GM12878 (cell line): ENCODE measurements at regions of chr16 and their contacts with region 1.

Region 1: DNA sequence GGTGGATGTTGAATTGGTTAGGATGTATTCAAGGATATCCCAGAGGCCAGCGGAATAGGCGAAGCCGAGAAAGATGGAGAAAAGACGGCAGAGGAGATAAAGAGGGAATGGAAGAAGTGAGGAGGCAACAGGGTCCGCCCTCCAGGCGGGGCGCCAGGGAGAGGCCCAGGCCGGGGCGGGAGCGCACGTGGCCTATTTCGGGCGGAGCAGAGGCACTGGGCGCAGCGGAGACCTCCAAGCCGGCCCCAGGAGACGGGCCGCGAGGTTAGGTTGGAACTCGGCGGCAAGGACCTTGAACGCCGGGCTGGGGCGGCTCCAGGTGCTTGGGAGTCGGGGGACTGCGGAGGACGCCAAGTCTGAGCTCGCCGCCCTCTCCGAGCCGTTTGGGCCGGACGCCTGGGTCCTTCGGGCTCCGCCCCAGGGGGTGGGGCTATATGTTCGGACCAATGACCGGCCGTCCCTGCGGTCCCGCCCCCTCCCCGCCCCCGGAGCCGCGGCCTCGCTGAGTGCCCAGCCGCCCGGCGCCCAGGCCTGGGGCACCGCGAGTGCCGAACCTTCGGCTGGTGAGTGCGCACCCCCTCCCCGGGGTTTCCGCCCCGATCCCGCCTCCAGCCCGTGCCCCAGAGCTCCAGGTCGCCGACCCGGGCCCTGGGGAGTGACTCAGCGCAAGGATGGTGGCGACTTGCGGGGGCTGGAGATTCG is at the start of gene ZNF771:
- DNase-seq: no peak
- ATAC-seq: peak; percentile 93
- H3K4me3 ChIP-seq: peak within 1 kb of the TSS; percentile 83
- H3K27ac ChIP-seq: no peak within 1 kb of the TSS
- H3K4me1 ChIP-seq: peaks cover 14% of the 10 kb centered on the region
- H3K27me3 ChIP-seq: no peaks in the 10 kb centered on the region; a peak in 1 of 4 replicates
- CTCF ChIP-seq: peak in 1 of 3 experiments; percentile 21; a peak in 1 of 6 replicates
- EP300 ChIP-seq: no peak
- POLR2A ChIP-seq: peak; percentile 82
- RAD21 ChIP-seq: no peak
- polyA plus RNA-seq, gene ZNF771: 0.98 to 2.0 TPM

Region 2: GRCh38 chr16:30112197-30113030 is 294.8 kb before region 1 on chr16:
- CTCF ChIA-PET with region 1: interaction called, 12 read pairs
- POLR2A ChIA-PET with region 1: interaction called, 4 read pairs
- RAD21 ChIA-PET with region 1: interaction called, 3 read pairs
- SMC1A ChIA-PET with region 1: no interaction called
- in situ Hi-C with region 1: no loop called
- intact Hi-C with region 1: no loop called
- DNase-seq: no peak
- ATAC-seq: peak; percentile 93
- H3K4me3 ChIP-seq: no peak overlapping the region
- H3K27ac ChIP-seq: no peak overlapping the region
- H3K4me1 ChIP-seq: peaks cover 2% of the 10 kb centered on the region
- H3K27me3 ChIP-seq: no peaks in the 10 kb centered on the region
- CTCF ChIP-seq: peak; percentile 75 to 87 (median 76)
- EP300 ChIP-seq: no peak
- POLR2A ChIP-seq: no peak
- RAD21 ChIP-seq: peak; percentile 61

Region 3: DNA sequence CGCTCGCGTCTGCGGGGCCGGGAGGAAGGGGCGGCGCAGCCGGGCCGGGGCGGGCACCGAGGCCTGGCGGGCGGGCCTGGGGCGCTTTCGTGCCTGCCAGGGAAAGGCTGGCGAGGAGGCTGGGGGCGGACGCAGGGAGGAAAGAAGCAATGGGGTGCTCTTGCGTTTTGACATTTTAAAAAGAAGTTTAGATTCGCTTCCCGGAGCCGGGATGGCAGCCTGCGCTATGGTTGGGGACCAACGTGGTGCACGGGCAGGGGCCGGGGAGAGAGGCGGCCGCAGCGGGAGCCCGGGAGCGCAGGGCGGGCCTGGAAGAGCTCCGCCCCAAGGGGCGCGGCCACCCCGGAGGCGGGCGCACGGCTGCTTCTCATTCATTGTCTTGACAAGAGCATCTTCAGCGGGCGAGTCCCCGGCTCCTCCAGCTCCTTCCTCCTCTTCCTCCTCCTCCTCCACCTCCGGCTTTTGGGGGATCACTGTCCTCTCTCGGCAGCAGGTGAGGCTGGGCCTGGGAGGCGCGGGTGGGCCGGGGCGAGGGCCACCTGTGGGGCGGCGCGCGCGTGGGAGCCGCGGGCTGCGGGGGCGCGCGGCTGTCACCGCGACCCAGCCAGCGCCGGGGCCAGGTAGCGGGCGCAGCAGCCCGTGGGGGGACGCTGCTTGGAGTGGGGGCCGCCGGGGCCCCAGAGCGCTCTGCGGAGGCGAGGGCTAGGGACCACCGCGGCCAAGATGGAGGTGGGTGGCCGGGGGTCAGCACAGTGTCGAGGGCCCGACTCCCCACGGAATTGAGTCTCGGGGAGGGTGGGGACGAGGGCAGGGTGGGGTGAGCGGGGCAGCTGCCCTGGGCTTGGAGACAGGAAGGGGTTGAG is 223.8 kb before region 1 on chr16 and contains the start of gene CORO1A:
- CTCF ChIA-PET with region 1: interaction called, 10 read pairs
- POLR2A ChIA-PET with region 1: interaction called, 5 read pairs
- RAD21 ChIA-PET with region 1: interaction called, 6 read pairs
- SMC1A ChIA-PET with region 1: no interaction called
- in situ Hi-C with region 1: no loop called
- intact Hi-C with region 1: no loop called
- DNase-seq: peak; percentile 32
- ATAC-seq: peak; percentile 51
- H3K4me3 ChIP-seq: peak within 1 kb of the TSS; percentile 96
- H3K27ac ChIP-seq: peak within 1 kb of the TSS; percentile 100
- H3K4me1 ChIP-seq: peaks cover 28% of the 10 kb centered on the region
- H3K27me3 ChIP-seq: no peaks in the 10 kb centered on the region
- CTCF ChIP-seq: no peak
- EP300 ChIP-seq: no peak
- POLR2A ChIP-seq: peak; percentile 62
- RAD21 ChIP-seq: no peak
- polyA plus RNA-seq, gene CORO1A: 16.3 to 35.3 TPM

Region 4: GRCh38 chr16:30370444-30371247 is 36.6 kb before region 1 on chr16 and contains the start of gene TBC1D10B:
- CTCF ChIA-PET with region 1: interaction called, 70 read pairs
- POLR2A ChIA-PET with region 1: interaction called, 12 read pairs
- RAD21 ChIA-PET with region 1: interaction called, 33 read pairs
- SMC1A ChIA-PET with region 1: interaction called, 16 read pairs
- in situ Hi-C with region 1: no loop called
- intact Hi-C with region 1: no loop called
- DNase-seq: peak; percentile 100
- ATAC-seq: peak; percentile 91
- H3K4me3 ChIP-seq: peak within 1 kb of the TSS; percentile 97
- H3K27ac ChIP-seq: peak within 1 kb of the TSS; percentile 77
- H3K4me1 ChIP-seq: peaks cover 16% of the 10 kb centered on the region
- H3K27me3 ChIP-seq: no peaks in the 10 kb centered on the region
- CTCF ChIP-seq: peak in 2 of 3 experiments; percentile 13 to 24; a peak in 3 of 6 replicates
- EP300 ChIP-seq: no peak
- POLR2A ChIP-seq: no peak; the same call in 1 of the 2 replicates
- RAD21 ChIP-seq: no peak
- polyA plus RNA-seq, gene TBC1D10B: 2.2 to 4.4 TPM

Region 5: GRCh38 chr16:30395155-30395991 is 11.9 kb before region 1 on chr16 and contains the start of gene ZNF48:
- CTCF ChIA-PET with region 1: interaction called, 29 read pairs
- POLR2A ChIA-PET with region 1: interaction called, 12 read pairs
- RAD21 ChIA-PET with region 1: interaction called, 32 read pairs
- SMC1A ChIA-PET with region 1: interaction called, 12 read pairs
- in situ Hi-C with region 1: no loop called
- intact Hi-C with region 1: no loop called
- DNase-seq: no peak
- ATAC-seq: peak; percentile 90
- H3K4me3 ChIP-seq: peak within 1 kb of the TSS; percentile 92
- H3K27ac ChIP-seq: peak within 1 kb of the TSS; percentile 42
- H3K4me1 ChIP-seq: peaks cover 13% of the 10 kb centered on the region
- H3K27me3 ChIP-seq: no peaks in the 10 kb centered on the region
- CTCF ChIP-seq: peak in 2 of 3 experiments; percentile 42 to 46; a peak in 3 of 6 replicates
- EP300 ChIP-seq: no peak
- POLR2A ChIP-seq: peak; percentile 74
- RAD21 ChIP-seq: no peak
- polyA plus RNA-seq, gene ZNF48: 0.14 to 1.0 TPM

Region 6: GRCh38 chr16:30445408-30446202 is 38.4 kb after region 1 on chr16 and contains the start of gene SEPHS2:
- CTCF ChIA-PET with region 1: no interaction called
- POLR2A ChIA-PET with region 1: no interaction called
- RAD21 ChIA-PET with region 1: no interaction called
- SMC1A ChIA-PET with region 1: no interaction called
- in situ Hi-C with region 1: no loop called
- intact Hi-C with region 1: no loop called
- DNase-seq: peak; percentile 84
- ATAC-seq: peak; percentile 94
- H3K4me3 ChIP-seq: peak within 1 kb of the TSS; percentile 79
- H3K27ac ChIP-seq: peak within 1 kb of the TSS; percentile 85
- H3K4me1 ChIP-seq: peaks cover 10% of the 10 kb centered on the region
- H3K27me3 ChIP-seq: no peaks in the 10 kb centered on the region
- CTCF ChIP-seq: peak; percentile 38 to 52 (median 49); a peak in 5 of 6 replicates
- EP300 ChIP-seq: no peak
- POLR2A ChIP-seq: peak; percentile 90
- RAD21 ChIP-seq: no peak
- polyA plus RNA-seq, gene SEPHS2: 21.6 to 37.4 TPM

Region 7: DNA sequence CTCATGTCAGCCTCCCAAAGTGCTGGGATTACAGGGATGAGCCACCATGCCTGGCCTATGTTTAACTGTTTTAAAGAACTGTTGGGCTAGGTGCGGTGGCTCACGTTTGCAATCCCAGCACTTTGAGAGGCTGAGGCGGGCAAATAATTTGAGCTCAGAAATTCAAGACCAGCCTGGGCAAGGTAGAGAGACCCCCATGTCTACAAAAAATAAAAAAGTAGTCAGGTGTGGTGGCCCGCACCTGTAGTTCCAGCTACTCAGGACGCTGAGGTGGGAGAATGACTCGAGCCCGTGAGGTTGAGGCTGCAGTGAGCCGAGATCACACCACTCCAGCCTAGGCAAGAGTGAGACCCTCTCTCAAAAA is 63.4 kb after region 1 on chr16:
- CTCF ChIA-PET with region 1: no interaction called
- POLR2A ChIA-PET with region 1: no interaction called
- RAD21 ChIA-PET with region 1: no interaction called
- SMC1A ChIA-PET with region 1: no interaction called
- in situ Hi-C with region 1: no loop called
- intact Hi-C with region 1: no loop called
- DNase-seq: no peak
- ATAC-seq: no peak
- H3K4me3 ChIP-seq: no peak overlapping the region
- H3K27ac ChIP-seq: peak overlapping the region; percentile 90
- H3K4me1 ChIP-seq: peaks cover 40% of the 10 kb centered on the region
- H3K27me3 ChIP-seq: no peaks in the 10 kb centered on the region
- CTCF ChIP-seq: no peak
- EP300 ChIP-seq: no peak
- POLR2A ChIP-seq: no peak
- RAD21 ChIP-seq: no peak

Region 8: DNA sequence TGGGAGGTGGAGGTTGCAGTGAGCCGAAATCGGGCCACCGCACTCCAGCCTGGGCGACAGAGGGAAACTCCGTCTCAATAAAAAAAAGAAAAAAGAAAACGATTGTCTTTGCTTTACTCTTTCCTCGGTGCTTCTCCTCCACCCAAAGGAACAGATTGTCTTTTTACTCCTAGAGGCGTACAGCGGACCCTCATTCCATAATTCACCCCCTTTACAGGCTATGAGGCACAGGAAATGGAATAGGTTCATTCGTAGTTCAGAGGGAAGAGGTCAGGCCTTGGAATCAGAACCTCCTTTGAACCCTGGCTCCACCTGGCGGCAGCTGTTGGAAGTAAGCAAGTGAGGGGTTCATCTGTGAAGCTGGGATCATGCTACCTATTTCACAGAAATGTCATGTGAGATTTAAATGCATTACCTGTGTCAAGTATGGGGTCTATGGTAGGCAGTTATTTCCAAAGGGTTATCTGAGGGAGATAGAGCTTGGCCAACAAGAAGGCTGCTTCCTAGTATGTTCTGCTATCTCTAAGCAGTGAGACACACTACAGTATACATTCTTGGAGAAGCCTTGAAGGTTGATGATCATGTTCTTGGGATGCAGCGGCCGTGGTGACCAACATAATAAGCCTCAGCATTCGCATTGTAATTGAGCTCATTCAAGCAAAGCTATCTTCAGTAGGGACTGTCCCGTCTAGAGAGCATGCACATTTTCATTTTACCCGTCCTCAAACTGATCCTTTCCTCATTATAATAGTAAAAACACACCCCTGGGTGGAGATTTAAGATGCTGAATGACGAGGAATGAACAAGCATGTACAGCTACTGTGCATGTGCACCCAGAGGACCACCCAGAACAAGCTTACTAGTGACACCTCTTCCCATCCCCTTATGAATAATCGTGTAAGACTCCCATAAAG is 221.6 kb after region 1 on chr16:
- CTCF ChIA-PET with region 1: interaction called, 10 read pairs
- POLR2A ChIA-PET with region 1: no interaction called
- RAD21 ChIA-PET with region 1: interaction called, 5 read pairs
- SMC1A ChIA-PET with region 1: interaction called, 4 read pairs
- in situ Hi-C with region 1: no loop called
- intact Hi-C with region 1: no loop called
- DNase-seq: no peak
- ATAC-seq: peak; percentile 97
- H3K4me3 ChIP-seq: no peak overlapping the region
- H3K27ac ChIP-seq: no peak overlapping the region
- H3K4me1 ChIP-seq: peaks cover 5% of the 10 kb centered on the region
- H3K27me3 ChIP-seq: no peaks in the 10 kb centered on the region
- CTCF ChIP-seq: peak; percentile 90 to 95 (median 93); a peak in 5 of 6 replicates
- EP300 ChIP-seq: no peak
- POLR2A ChIP-seq: no peak
- RAD21 ChIP-seq: peak; percentile 81